GM10248 (cell line): ENCODE measurements at regions of chr17 and their contacts with region 1.

Region 1: GRCh38 chr17:50114849-50115357 is 15.1 kb downstream of the SAMD14 start:
- DNase-seq: peak; percentile 68
- CTCF ChIP-seq: peak; percentile 69

Region 2: DNA sequence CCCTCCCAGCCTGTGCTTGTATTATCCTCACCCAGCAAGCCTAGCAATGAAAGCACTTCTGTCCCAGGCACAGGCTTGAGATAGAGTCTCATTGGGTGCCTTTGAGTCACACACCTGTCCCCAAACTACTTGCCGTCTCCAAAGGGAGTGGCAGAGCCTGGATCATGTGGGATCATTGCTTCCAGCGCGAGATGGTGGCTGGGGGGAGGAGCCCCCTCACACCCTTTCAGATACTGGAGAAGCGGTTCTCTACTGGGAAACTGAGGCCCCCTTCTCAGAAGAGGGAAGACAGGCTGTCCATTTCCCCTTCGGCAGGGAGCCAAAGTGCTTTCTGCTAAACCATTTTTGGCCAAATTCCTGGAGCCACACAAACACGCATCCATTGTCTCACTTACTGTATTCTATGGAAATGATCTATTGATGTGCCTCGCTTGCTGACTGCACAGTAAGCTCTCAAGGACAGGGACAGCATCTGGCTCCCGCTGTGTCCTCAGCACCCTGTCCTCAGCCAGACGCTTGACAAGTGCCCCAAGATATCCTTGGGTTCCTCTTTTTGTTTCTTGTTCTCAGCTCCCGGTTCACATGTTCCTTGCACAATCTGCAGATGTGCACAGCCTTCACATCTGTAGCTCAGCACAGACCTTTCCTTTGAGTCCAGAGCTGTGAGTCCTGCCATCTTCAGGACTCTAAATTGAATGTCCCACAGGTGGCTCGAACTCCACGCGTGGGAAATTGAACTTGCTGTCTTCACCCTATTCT is 93.9 kb before region 1 on chr17:
- CTCF ChIA-PET with region 1: no interaction called
- POLR2A ChIA-PET with region 1: no interaction called
- DNase-seq: no peak
- CTCF ChIP-seq: no peak

Region 3: GRCh38 chr17:50129728-50130558 is 15.0 kb after region 1 on chr17 and contains the start of gene SAMD14:
- CTCF ChIA-PET with region 1: interaction called, 15 read pairs
- POLR2A ChIA-PET with region 1: no interaction called
- DNase-seq: peak; percentile 76
- CTCF ChIP-seq: no peak

Region 4: DNA sequence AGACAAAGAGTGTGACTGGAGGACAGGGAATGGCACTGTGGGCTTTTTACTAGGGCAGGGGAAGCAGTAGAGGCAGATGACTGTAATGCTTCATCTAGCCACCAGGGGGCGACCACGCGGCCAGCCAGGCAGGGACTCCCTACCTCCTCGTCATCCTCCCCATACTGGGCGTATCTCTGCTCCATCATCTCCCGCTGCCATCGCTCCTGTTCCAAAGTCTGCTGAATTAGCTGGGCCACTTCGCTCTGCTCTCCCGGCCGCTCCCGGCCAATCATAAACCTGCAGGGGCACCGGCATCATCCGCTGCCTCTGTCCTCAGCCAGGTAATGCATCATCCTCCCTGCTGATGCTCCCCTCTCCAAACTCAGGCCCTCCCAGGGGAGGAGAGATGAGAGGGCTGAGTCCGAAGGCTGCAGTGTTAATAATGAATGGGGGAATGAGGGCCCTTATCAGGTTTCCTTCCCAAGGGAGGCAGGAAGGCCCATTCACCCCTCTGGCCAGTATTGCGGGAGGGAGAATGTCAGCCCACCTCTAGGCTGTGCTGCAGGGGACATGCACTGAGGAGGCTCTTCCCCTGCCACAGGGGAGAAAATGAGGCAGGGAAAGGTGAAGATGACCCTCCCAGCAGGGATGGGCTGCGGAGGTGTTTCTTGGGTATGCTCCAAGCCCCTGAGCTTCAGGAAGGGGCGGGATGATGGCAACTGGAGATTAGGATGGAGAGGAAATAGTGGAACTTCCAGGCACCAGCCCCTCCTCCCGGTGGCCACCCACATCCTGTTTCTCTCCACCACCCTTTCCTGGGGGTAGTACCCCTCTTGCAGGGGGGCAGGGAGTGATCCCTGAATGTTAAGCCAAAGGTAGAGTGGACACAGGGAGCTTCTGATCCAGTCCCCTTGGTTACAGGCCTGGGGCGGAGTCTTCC is 25.3 kb after region 1 on chr17:
- CTCF ChIA-PET with region 1: interaction called, 37 read pairs
- POLR2A ChIA-PET with region 1: no interaction called
- DNase-seq: peak; percentile 87
- CTCF ChIP-seq: peak; percentile 87

Region 5: DNA sequence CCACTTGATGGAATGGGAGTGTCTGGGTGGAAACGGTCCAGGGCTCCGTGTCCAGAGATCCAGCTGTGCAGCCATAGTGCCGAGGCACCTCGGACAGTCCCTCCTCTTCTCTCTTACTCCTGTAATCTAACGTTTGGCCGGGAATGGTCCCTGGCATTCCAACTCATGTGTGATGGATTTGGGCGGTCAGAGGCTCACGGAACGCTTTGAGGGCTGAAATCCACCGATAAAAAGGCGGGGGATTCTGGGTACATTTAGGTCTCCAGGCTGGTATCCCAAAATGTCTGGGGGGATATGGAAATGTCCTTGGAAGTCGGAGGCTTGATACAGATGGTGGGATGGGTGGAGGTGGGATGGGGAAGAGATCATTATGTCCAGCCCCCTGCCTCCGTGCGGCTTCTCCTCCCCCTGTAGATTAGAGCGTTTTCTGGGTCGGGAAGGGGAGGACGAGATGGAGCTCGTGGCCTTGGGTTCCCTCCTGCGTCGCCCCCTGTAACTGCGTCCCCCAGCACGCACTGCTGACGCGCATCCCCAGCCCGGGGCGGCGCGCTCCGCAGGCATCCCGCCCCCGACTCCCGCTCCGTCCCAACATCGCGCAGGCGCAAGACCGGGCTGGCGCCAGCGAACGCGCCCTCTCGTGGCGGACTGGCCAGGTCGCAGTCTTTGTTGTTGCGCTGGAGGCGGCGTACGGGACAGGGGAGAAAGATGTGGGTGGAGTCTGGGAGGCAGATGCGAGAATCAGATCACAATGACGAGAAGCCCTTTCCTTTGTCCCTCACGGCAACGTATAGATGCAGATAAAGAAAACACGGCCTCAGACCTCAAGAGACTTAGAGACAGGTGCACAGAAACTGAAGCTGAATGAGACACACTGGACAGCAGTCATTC is 46.4 kb after region 1 on chr17:
- CTCF ChIA-PET with region 1: interaction called, 48 read pairs
- POLR2A ChIA-PET with region 1: no interaction called
- DNase-seq: peak; percentile 99
- CTCF ChIP-seq: peak; percentile 93

Region 6: GRCh38 chr17:50177983-50178834 is 63.3 kb after region 1 on chr17:
- CTCF ChIA-PET with region 1: interaction called, 12 read pairs
- POLR2A ChIA-PET with region 1: no interaction called
- DNase-seq: peak; percentile 77
- CTCF ChIP-seq: peak; percentile 78

Region 7: GRCh38 chr17:50883850-50884438 is 769.0 kb after region 1 on chr17:
- CTCF ChIA-PET with region 1: no interaction called
- POLR2A ChIA-PET with region 1: no interaction called
- DNase-seq: peak; percentile 49
- CTCF ChIP-seq: no peak